Upper lobe of right lung (tissue), 1 donor: ENCODE measurements at regions of chr1 and their contacts with region 1.

Region 1: GRCh38 chr1:6401673-6402072 is 8.1 kb upstream of the ACOT7 start:
- DNase-seq: no peak
- ATAC-seq: peak; percentile 85
- H3K4me3 ChIP-seq: no peak overlapping the region
- H3K27ac ChIP-seq: no peak overlapping the region
- H3K4me1 ChIP-seq: no peaks in the 10 kb centered on the region
- H3K27me3 ChIP-seq: peaks cover 10% of the 10 kb centered on the region
- CTCF ChIP-seq: no peak

Region 2: DNA sequence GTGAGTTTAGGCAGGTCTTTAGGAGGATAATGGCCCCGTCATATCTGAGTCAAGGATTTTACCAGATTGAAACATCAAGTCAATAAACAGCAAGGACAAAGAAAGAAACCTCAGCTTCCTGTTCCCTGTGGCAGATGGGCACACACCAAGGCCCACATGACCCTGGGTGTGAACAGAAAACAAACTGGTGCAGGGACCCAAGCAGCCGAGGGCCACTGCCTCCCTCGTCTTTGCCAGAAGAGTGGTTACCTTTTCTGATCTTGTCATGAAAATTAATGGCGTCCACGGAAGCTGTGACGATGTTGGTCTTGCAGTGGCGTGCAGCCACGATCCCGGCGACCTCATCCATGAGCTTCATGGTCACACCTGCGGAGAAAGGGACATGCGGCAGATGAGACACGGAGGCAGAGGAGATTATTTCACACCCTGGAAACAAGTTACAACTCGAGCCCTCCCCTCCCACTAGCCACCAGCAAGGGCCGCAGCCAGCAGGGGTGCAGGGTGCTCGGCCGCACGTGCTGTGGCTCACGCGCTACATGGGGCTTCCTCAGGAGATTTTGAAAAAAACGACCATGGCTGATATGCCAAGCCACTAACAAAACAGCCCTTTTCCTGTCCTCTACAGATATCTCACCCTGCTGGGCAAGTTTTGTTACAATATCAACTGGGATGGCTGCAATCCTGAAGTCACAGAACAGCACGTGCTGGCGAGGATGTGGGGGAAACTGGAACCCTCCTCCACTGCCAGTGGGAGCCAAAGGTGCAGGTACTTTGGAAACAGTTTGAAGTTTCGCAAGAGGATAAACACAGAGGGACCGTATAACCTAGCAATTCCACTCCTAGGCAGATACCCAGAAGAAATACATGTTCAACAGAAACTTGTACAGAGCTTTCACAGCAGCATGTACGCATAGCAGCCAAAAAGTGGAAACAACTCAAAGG is 106.8 kb before region 1 on chr1:
- intact Hi-C with region 1: no loop called
- DNase-seq: no peak
- ATAC-seq: peak; percentile 44
- H3K4me3 ChIP-seq: no peak overlapping the region
- H3K27ac ChIP-seq: no peak overlapping the region
- H3K4me1 ChIP-seq: no peaks in the 10 kb centered on the region
- H3K27me3 ChIP-seq: no peaks in the 10 kb centered on the region
- CTCF ChIP-seq: no peak

Region 3: GRCh38 chr1:6359216-6360116 is 42.2 kb before region 1 on chr1:
- intact Hi-C with region 1: loop called (anchors 5 kb)
- DNase-seq: peak; percentile 89
- ATAC-seq: peak; percentile 91
- H3K4me3 ChIP-seq: peak overlapping the region; percentile 8
- H3K27ac ChIP-seq: peak overlapping the region; percentile 91
- H3K4me1 ChIP-seq: peaks cover 30% of the 10 kb centered on the region
- H3K27me3 ChIP-seq: no peaks in the 10 kb centered on the region
- CTCF ChIP-seq: peak; percentile 5

Region 4: DNA sequence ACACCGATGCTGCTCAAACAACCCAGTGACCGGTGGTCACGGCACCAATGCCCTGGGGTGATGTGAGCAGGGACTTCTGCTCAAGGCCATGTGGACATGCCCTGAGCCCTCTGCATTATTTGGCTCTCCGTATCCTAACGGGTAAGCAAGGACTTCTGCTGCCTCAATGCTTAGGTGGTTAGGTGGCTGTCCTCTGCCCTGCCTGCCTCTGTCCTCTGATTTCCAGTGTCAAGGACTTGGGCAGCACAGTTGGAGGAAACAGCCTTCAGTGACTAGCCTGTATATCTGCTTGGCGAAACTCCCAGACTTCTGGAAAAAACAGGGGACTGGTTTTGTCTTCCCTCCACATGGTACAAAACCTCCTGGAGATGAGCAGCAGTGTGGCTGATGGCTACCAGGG is 265.5 kb after region 1 on chr1:
- intact Hi-C with region 1: no loop called
- DNase-seq: no peak
- ATAC-seq: no peak
- H3K4me3 ChIP-seq: no peak overlapping the region
- H3K27ac ChIP-seq: no peak overlapping the region
- H3K4me1 ChIP-seq: no peaks in the 10 kb centered on the region
- H3K27me3 ChIP-seq: no peaks in the 10 kb centered on the region
- CTCF ChIP-seq: no peak